Activated CD4-positive, alpha-beta memory T cell treated with anti-CD3 and anti-CD28 coated beads for 36 hours (primary cell): ENCODE measurements at regions of chr9 and their contacts with region 1.

Region 1: GRCh38 chr9:2857564-2858198 is 13.8 kb upstream of the PUM3 start:
- DNase-seq: peak; percentile 74
- H3K4me3 Mint-ChIP-seq: no peak overlapping the region
- H3K27ac Mint-ChIP-seq: no peak overlapping the region
- H3K4me1 Mint-ChIP-seq: peaks cover 3% of the 10 kb centered on the region
- H3K27me3 Mint-ChIP-seq: peaks cover 11% of the 10 kb centered on the region

Region 2: DNA sequence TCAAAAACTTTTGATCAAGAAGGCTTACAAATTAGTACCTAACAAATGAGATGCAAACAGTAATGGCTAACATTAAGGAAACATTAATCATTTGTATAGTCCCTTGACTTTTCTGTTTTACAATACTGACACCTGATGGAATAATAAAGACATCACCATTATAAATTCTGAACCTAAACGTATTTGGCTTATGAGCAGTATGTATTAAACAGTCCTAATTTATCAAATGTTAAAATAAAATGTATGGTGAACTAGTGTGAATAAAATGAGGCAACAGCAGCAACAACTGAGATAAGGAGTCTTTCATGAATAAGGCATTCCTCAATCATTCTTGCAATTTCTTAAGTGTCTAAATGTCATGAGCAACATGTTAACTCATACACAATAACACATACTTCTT is 19.8 kb before region 1 on chr9:
- CTCF ChIA-PET with region 1: interaction called, 29 read pairs
- POLR2A ChIA-PET with region 1: no interaction called
- intact Hi-C with region 1: no loop called
- DNase-seq: no peak
- H3K4me3 Mint-ChIP-seq: no peak overlapping the region
- H3K27ac Mint-ChIP-seq: no peak overlapping the region
- H3K4me1 Mint-ChIP-seq: peaks cover 34% of the 10 kb centered on the region
- H3K27me3 Mint-ChIP-seq: no peaks in the 10 kb centered on the region

Region 3: GRCh38 chr9:2919347-2919746 is 61.7 kb after region 1 on chr9:
- CTCF ChIA-PET with region 1: interaction called, 3 read pairs
- POLR2A ChIA-PET with region 1: no interaction called
- intact Hi-C with region 1: loop called (anchors 10 kb)
- DNase-seq: no peak
- H3K4me3 Mint-ChIP-seq: no peak overlapping the region
- H3K27ac Mint-ChIP-seq: no peak overlapping the region
- H3K4me1 Mint-ChIP-seq: no peaks in the 10 kb centered on the region
- H3K27me3 Mint-ChIP-seq: peaks cover 3% of the 10 kb centered on the region

Region 4: GRCh38 chr9:3181049-3181953 is 323.6 kb after region 1 on chr9:
- CTCF ChIA-PET with region 1: interaction called, 35 read pairs
- POLR2A ChIA-PET with region 1: no interaction called
- intact Hi-C with region 1: loop called (anchors 1 kb)
- DNase-seq: peak; percentile 65
- H3K4me3 Mint-ChIP-seq: peak overlapping the region; percentile 36
- H3K27ac Mint-ChIP-seq: no peak overlapping the region
- H3K4me1 Mint-ChIP-seq: peaks cover 3% of the 10 kb centered on the region
- H3K27me3 Mint-ChIP-seq: peaks cover 33% of the 10 kb centered on the region